GM18951 (cell line): ENCODE measurements at regions of chr5 and their contacts with region 1.

Region 1: DNA sequence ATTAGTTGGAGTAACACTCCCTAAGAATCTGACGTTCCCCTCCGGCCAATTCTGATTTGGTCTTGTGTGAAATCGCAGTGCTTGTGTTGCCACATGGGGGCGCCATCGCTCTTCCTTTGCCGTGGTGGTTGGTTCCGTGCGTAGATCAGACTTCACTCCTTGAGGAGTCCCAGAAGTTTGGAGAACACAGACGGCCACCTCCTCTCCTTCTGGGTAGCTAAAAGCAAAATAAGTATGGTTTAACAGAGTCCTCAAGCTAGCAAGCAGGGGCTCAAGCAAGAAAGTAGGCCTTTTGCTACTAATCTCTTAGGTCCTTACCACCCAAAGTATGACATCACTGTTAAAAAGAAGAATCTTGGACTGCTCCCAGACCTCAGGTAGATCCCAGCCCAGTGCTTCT is 59.5 kb downstream of the HSPA4 start:
- POLR2A ChIP-seq: no peak

Region 2: GRCh38 chr5:132064738-132065331 is 1046.5 kb before region 1 on chr5:
- in situ Hi-C with region 1: no loop called
- POLR2A ChIP-seq: no peak

Region 3: GRCh38 chr5:133051580-133052332 is 59.5 kb before region 1 on chr5 and contains the start of gene HSPA4:
- in situ Hi-C with region 1: no loop called
- POLR2A ChIP-seq: peak; percentile 91

Region 4: GRCh38 chr5:133179405-133179804 is 68.1 kb after region 1 on chr5:
- in situ Hi-C with region 1: no loop called
- POLR2A ChIP-seq: no peak

Region 5: GRCh38 chr5:133287500-133287899 is 176.2 kb after region 1 on chr5:
- in situ Hi-C with region 1: loop called (anchors 10 kb)
- POLR2A ChIP-seq: no peak

Region 6: DNA sequence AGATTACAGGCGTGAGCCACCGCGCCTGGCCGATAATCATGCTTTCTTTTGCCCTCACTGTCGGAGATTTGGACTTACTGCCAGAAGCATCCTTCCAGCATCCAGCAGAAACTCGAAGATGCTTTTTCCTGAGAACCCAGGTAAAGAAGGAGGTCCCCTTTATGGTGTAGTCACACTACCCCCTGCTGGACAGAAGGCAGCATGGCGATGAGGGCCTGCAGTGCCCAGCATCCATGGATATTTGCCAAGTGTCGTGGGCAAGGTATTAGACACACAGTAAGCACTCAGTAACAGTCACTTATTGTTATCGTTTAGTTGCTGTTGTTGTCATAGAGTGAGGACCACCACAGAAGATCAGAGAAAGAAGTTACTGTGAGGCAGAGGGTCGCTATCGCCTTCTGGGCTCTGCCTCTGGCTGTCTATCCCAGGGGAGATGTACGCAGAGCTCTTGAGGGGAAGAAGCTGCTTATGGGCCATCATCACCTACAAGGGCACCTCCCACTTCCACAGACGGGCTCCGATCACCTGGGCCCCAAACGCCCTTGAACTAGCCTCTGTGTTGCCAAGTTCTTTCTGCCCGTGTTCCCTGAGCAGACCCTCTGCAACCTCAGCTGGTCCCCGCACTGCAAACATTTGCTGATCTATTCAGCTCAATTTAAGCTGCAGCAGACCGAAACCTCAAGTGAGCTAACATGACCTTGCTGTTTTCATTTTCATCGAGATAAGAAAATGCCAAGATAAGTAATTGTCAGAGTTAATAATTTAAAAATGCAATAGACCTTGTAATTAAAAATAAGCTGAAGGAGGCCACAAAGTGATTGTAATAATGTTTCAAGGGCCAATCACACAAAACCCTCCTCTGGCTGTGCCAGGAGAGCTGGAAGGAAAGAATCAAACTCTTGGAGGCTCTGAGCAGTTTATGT is 833.2 kb after region 1 on chr5:
- in situ Hi-C with region 1: loop called (anchors 25 kb)
- POLR2A ChIP-seq: no peak